MCF 10A (cell line): ENCODE measurements at regions of chr7 and their contacts with region 1.

Region 1: GRCh38 chr7:37732253-37732652 is 48.7 kb downstream of the GPR141 start:
- DNase-seq: peak; percentile 97
- H3K4me3 Mint-ChIP-seq: peak overlapping the region; percentile 46
- H3K27ac Mint-ChIP-seq: peak overlapping the region; percentile 82
- H3K4me1 Mint-ChIP-seq: peaks cover 42% of the 10 kb centered on the region
- H3K27me3 Mint-ChIP-seq: no peaks in the 10 kb centered on the region
- CTCF ChIP-seq: peak; percentile 61

Region 2: GRCh38 chr7:37510043-37510634 is 222.1 kb before region 1 on chr7:
- CTCF ChIA-PET with region 1: interaction called, 5 read pairs
- POLR2A ChIA-PET with region 1: no interaction called
- intact Hi-C with region 1: loop called (anchors 10 kb)
- DNase-seq: peak; percentile 51
- H3K4me3 Mint-ChIP-seq: no peak overlapping the region
- H3K27ac Mint-ChIP-seq: no peak overlapping the region
- H3K4me1 Mint-ChIP-seq: no peaks in the 10 kb centered on the region
- H3K27me3 Mint-ChIP-seq: no peaks in the 10 kb centered on the region
- CTCF ChIP-seq: peak; percentile 63

Region 3: GRCh38 chr7:37570145-37570544 is 162.1 kb before region 1 on chr7:
- CTCF ChIA-PET with region 1: no interaction called
- POLR2A ChIA-PET with region 1: no interaction called
- intact Hi-C with region 1: no loop called
- DNase-seq: no peak
- H3K4me3 Mint-ChIP-seq: no peak overlapping the region
- H3K27ac Mint-ChIP-seq: no peak overlapping the region
- H3K4me1 Mint-ChIP-seq: no peaks in the 10 kb centered on the region
- H3K27me3 Mint-ChIP-seq: no peaks in the 10 kb centered on the region
- CTCF ChIP-seq: no peak

Region 4: DNA sequence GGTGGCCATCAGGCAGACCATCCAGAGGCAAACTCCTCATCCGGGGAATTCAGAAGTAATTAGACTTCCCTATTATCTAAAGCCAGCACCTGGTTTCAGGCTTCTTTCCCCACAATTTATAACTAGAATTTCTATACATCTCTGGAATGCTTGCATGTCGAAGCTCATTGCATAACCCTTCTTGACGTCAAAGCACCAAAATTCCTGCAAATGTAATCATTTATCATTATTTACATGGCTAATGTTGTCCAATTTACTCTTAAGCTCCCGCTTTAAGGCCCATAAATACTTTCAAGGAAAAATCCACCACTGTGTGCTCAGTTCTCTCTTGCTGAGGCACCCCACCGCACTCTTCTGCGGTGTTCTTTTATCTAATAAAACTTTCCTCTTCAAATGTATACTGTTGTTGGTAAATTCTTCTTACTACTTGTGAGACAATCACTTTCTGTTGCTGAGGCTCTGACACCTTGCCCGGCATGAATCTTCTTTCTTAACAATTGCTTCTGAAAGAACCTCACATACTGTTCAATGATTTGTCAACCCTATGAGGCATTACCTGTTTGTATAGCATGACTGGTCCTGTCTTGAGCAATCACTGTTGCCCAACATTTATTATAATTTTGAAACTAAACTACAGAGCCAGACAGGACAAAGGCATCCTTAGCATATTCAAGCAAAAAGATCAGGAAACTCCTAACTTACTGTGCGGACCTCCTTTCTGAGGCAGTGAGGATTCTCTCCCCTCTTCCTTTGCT is 66.0 kb before region 1 on chr7:
- CTCF ChIA-PET with region 1: interaction called, 11 read pairs
- POLR2A ChIA-PET with region 1: interaction called, 9 read pairs
- intact Hi-C with region 1: no loop called
- DNase-seq: peak; percentile 95
- H3K4me3 Mint-ChIP-seq: peak overlapping the region; percentile 1
- H3K27ac Mint-ChIP-seq: peak overlapping the region; percentile 70
- H3K4me1 Mint-ChIP-seq: peaks cover 33% of the 10 kb centered on the region
- H3K27me3 Mint-ChIP-seq: no peaks in the 10 kb centered on the region
- CTCF ChIP-seq: no peak

Region 5: DNA sequence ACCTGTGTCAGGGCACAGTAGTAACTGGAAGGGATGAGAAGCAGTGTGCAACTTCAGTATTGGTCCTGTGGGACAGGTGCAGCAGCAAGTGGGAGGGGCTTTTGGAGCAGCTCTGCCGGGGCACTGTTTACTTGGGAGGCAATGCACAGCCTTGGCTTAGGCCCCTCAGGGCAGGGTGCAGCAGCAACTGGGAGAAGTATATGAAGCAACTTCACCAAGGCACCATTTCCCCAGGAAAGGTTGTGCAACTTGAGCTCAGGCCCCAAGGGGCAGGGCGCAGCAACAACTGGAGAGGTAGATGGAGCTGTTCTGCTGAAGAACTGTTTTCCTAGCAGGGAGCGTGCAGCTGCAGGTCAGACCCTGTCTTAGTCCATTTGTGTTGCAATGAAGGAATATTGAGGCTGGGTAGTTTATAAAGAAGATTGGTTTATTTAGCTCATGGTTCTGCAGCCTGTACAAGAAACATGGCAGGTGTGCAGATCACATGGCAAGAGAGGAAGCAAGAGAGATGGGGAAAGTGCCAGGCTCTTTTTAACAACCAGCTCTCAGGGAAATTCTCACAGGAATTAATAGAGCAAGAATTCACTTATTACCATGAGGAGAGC is 38.0 kb before region 1 on chr7:
- CTCF ChIA-PET with region 1: interaction called, 39 read pairs
- POLR2A ChIA-PET with region 1: interaction called, 90 read pairs
- intact Hi-C with region 1: no loop called
- DNase-seq: peak; percentile 97
- H3K4me3 Mint-ChIP-seq: no peak overlapping the region
- H3K27ac Mint-ChIP-seq: peak overlapping the region; percentile 28
- H3K4me1 Mint-ChIP-seq: peaks cover 24% of the 10 kb centered on the region
- H3K27me3 Mint-ChIP-seq: no peaks in the 10 kb centered on the region
- CTCF ChIP-seq: no peak

Region 6: DNA sequence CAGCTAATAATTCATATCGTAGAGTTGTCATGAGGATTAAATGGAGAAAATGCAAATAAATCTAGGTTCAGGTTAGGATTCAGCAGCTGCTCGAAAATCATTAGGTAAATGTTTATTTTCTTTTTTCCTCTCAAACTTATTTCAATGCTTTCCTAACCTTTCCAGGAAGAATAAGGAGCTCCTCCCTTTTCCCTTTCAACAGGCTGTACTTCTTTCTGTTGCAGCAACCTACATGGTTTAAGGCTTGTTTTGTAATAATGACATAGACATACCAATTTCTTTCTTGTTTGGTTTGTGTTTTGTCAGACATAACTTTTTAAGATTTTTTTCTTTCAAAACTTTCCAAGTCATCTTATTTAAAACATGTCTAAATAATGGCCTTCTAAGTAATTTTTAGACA is 30.5 kb before region 1 on chr7:
- CTCF ChIA-PET with region 1: interaction called, 10 read pairs
- POLR2A ChIA-PET with region 1: interaction called, 23 read pairs
- intact Hi-C with region 1: no loop called
- DNase-seq: peak; percentile 41
- H3K4me3 Mint-ChIP-seq: no peak overlapping the region
- H3K27ac Mint-ChIP-seq: no peak overlapping the region
- H3K4me1 Mint-ChIP-seq: peaks cover 26% of the 10 kb centered on the region
- H3K27me3 Mint-ChIP-seq: no peaks in the 10 kb centered on the region
- CTCF ChIP-seq: no peak

Region 7: GRCh38 chr7:37709631-37710509 is 22.4 kb before region 1 on chr7:
- CTCF ChIA-PET with region 1: interaction called, 10 read pairs
- POLR2A ChIA-PET with region 1: interaction called, 23 read pairs
- intact Hi-C with region 1: no loop called
- DNase-seq: no peak
- H3K4me3 Mint-ChIP-seq: no peak overlapping the region
- H3K27ac Mint-ChIP-seq: no peak overlapping the region
- H3K4me1 Mint-ChIP-seq: peaks cover 21% of the 10 kb centered on the region
- H3K27me3 Mint-ChIP-seq: no peaks in the 10 kb centered on the region
- CTCF ChIP-seq: no peak

Region 8: DNA sequence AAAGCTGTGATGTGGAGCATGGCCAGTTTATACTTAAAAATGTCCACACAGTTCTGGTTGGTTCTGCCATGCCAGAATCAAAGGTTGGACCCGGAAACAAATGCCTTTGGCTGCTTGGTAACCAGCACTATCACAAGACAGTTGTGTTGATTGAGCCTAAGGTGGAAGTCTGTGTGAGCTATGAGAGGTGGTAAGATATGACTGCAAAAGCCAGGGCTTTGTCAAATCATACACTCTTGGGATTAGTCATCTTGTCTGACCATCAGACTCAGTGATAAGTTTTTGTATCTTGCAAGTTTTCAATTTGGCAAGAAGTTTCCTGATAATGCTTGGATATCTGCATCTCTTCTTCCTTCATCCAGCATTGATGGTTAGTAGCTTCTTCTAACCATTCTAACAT is 13.2 kb before region 1 on chr7:
- CTCF ChIA-PET with region 1: interaction called, 4 read pairs
- POLR2A ChIA-PET with region 1: interaction called, 11 read pairs
- intact Hi-C with region 1: no loop called
- DNase-seq: no peak
- H3K4me3 Mint-ChIP-seq: no peak overlapping the region
- H3K27ac Mint-ChIP-seq: no peak overlapping the region
- H3K4me1 Mint-ChIP-seq: peaks cover 7% of the 10 kb centered on the region
- H3K27me3 Mint-ChIP-seq: no peaks in the 10 kb centered on the region
- CTCF ChIP-seq: no peak